B cell (primary cell): ENCODE measurements at regions of chr15 and their contacts with region 1.

Region 1: DNA sequence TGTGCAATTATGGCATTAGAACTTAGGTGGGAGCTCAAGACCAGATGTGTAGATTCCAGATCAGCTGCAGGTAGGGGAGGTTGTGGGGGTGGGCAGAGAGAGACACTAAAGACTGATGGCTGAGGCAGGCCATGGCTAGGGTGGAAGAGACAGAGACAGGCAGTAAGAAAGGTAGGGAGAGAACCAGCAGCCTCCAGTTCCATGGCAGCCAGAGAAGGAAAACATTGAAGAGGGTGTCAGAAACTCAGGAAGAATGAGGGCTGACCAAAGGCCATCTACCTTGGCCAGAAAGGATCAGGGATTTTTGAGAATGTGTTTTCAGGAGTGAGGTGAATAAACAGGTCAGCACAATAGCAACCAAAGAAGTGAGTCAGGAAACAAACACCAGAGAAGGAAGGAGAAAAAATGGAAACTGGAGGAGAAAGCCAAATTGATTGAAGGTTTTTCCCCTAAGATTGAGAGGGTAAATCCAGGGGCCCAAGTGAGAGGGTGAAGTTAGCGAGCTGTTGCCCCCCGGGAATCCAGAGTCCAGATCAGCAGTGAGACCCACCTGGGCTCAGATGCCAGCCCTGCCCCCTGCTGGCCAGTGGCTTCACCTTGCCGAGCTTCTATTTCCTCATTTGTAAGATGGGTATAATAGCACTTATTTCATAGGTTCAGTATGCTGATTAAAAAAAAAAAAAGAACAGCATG is 41.0 kb downstream of the ABHD2 start:
- DNase-seq: peak; percentile 66
- ATAC-seq: peak; percentile 66
- H3K4me3 ChIP-seq: no peak overlapping the region
- H3K4me3 Mint-ChIP-seq: no peak overlapping the region
- H3K27ac ChIP-seq: no peak overlapping the region
- H3K27ac Mint-ChIP-seq: no peak overlapping the region
- H3K4me1 ChIP-seq: peaks cover 4 to 15% of the 10 kb centered on the region in 2 donors
- H3K4me1 Mint-ChIP-seq: peaks cover 16% of the 10 kb centered on the region
- H3K27me3 ChIP-seq: no peaks in the 10 kb centered on the region
- H3K27me3 Mint-ChIP-seq: no peaks in the 10 kb centered on the region
- CTCF ChIP-seq: peak; percentile 86

Region 2: GRCh38 chr15:88897456-88898194 is 231.6 kb before region 1 on chr15:
- CTCF ChIA-PET with region 1: interaction called, 75 read pairs
- POLR2A ChIA-PET with region 1: no interaction called
- intact Hi-C with region 1: loop called (anchors 2 kb)
- DNase-seq: peak; percentile 44
- ATAC-seq: peak; percentile 70
- H3K4me3 ChIP-seq: no peak overlapping the region
- H3K4me3 Mint-ChIP-seq: no peak overlapping the region
- H3K27ac ChIP-seq: no peak overlapping the region
- H3K27ac Mint-ChIP-seq: no peak overlapping the region
- H3K4me1 ChIP-seq: peaks cover 12 to 22% of the 10 kb centered on the region in 2 donors
- H3K4me1 Mint-ChIP-seq: peaks cover 14% of the 10 kb centered on the region
- H3K27me3 ChIP-seq: peaks cover 0 to 15% (median 0%) of the 10 kb centered on the region in 4 experiments
- H3K27me3 Mint-ChIP-seq: peaks cover 8% of the 10 kb centered on the region
- CTCF ChIP-seq: no peak

Region 3: DNA sequence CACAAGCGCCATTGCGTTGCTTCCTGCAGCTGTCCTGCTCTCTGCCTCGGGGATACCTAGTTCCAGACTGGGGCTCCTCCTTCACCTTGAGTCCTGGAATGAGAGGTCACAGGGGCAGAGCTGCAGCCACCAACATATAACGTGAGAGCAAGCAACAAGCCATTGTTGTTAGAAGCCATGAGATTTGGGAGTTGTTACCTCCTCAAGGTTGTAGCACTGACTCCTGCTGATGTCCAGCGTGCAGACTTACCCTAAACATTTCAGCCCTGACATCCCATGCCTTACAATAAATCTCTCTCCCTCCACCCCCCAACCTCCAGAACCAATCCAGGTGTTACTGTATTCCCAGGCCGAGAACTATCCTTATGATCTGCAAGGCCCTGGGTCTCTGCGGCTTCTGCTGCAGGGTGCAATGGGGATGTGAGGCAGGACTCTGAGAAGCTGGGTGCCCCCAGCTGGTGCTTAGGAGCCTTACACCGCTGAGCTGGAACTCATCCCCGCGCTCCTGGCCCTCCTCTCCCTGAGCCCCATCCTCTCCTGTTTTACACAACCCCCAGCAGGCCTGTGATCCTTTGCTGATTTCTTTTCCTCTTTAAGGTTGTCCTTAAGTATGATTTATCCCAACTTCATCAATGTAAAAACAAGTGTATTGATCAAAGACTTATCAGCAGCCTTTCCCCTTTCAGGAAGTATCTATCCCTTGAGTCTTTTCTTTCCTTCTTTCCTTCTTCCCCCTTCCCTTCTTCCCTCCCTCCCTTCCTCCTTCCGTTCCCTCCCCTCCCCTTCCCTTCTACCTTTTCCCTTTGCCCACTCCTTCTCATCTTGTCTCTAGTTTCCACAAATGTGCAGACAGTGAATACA is 125.2 kb before region 1 on chr15:
- CTCF ChIA-PET with region 1: no interaction called
- POLR2A ChIA-PET with region 1: no interaction called
- intact Hi-C with region 1: no loop called
- DNase-seq: no peak
- ATAC-seq: no peak
- H3K4me3 ChIP-seq: no peak overlapping the region
- H3K4me3 Mint-ChIP-seq: no peak overlapping the region
- H3K27ac ChIP-seq: no peak overlapping the region
- H3K27ac Mint-ChIP-seq: no peak overlapping the region
- H3K4me1 ChIP-seq: no peaks in the 10 kb centered on the region
- H3K4me1 Mint-ChIP-seq: peaks cover 4% of the 10 kb centered on the region
- H3K27me3 ChIP-seq: peaks cover 0 to 3% (median 0%) of the 10 kb centered on the region in 4 experiments
- H3K27me3 Mint-ChIP-seq: peaks cover 32% of the 10 kb centered on the region
- CTCF ChIP-seq: no peak

Region 4: DNA sequence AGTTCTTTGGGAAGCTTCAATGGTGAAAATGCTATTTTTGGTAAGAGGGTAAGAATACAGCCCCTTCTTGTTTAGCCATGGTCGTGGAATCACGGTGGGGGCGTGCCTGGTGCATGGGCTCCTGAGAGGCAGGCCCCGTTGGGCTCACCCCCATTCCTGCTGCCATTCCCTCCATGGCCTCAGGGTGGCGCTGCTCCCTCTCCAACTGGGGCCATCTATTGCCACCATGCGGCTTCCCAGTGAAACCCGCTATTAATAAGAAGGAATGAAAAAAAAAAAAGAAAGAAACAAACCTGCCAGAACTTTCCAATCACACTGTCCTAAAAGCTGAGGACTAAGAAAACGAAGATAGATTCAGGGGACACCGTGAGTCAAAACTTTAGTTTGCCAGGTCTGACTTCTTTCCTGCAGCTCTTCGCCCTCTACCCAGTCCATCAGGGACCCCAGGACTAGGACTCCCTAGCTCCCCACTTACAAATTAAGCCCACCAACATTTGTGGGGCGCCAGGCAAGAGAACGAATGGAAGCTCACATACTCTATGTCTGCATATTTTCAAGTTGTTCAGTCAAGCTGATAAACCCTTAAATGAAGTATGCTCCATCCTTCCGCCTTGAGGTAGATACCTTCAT is 71.7 kb before region 1 on chr15:
- CTCF ChIA-PET with region 1: interaction called, 165 read pairs
- POLR2A ChIA-PET with region 1: no interaction called
- intact Hi-C with region 1: no loop called
- DNase-seq: peak; percentile 74
- ATAC-seq: peak; percentile 91
- H3K4me3 ChIP-seq: no peak overlapping the region
- H3K4me3 Mint-ChIP-seq: no peak overlapping the region
- H3K27ac ChIP-seq: no peak overlapping the region
- H3K27ac Mint-ChIP-seq: no peak overlapping the region
- H3K4me1 ChIP-seq: no peaks in the 10 kb centered on the region
- H3K4me1 Mint-ChIP-seq: no peaks in the 10 kb centered on the region
- H3K27me3 ChIP-seq: peaks cover 0 to 8% (median 0%) of the 10 kb centered on the region in 4 experiments
- H3K27me3 Mint-ChIP-seq: peaks cover 14% of the 10 kb centered on the region
- CTCF ChIP-seq: peak; percentile 95

Region 5: DNA sequence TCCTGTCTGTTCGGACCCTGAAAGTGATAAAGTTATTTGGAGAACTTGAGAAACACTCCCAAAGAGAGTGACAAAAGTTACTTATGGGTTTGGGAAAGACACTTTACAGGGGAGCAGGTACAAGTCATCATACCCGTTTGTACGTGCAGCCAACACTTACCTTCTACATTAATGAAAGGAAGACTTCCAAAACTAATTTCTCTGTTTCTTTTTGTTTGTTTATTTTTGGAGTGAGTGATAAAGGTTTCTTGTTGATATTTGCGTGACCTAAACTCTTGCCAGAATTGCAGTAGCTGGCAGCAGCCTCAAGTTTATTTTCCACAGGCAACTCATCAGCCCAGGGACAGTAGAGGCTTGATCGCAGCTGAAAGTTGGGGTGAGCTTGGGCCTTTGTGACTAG is 32.6 kb before region 1 on chr15:
- CTCF ChIA-PET with region 1: interaction called, 53 read pairs
- POLR2A ChIA-PET with region 1: no interaction called
- intact Hi-C with region 1: no loop called
- DNase-seq: no peak
- ATAC-seq: no peak
- H3K4me3 ChIP-seq: no peak overlapping the region
- H3K4me3 Mint-ChIP-seq: no peak overlapping the region
- H3K27ac ChIP-seq: no peak overlapping the region
- H3K27ac Mint-ChIP-seq: no peak overlapping the region
- H3K4me1 ChIP-seq: peaks cover 4% of the 10 kb centered on the region in 2 donors
- H3K4me1 Mint-ChIP-seq: peaks cover 5% of the 10 kb centered on the region
- H3K27me3 ChIP-seq: no peaks in the 10 kb centered on the region
- H3K27me3 Mint-ChIP-seq: no peaks in the 10 kb centered on the region
- CTCF ChIP-seq: no peak

Region 6: DNA sequence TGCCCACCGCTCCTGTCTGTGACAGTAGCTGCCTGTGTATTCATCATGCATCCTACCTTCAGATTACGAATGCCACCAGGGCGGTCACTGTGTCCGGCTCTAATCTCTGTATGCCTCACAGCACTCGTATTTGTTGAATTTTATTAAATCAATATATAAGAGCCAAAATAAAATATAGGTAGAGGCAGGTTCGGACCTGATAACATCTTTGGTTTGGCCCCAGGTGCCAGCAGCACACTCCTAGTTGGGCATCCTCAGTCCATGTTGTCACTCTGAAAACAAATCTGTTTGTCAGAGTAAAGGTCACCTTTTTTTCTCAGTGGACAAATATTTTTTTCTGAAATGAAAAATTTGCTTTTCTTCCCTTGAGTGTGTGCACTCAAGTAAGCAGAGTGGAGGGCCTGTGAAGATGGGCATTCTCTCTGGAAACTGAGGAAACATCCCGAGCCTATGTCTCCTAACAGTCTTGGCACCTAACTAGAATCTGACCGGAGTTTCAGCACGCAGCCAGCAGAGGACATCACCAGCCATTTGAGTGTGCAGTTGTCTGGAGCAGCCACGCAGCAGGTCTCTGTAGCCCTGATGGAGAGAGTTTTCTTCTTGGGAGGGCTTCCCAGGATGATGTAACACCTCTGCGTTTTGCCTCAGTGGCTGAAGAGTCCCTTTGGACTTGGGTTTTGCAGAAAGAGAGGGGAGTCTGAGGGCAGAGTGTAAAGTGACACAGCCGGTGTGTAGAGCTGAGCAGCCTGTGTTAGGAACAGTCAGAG is 10.3 kb after region 1 on chr15:
- CTCF ChIA-PET with region 1: interaction called, 10 read pairs
- POLR2A ChIA-PET with region 1: no interaction called
- intact Hi-C with region 1: no loop called
- DNase-seq: no peak
- ATAC-seq: no peak
- H3K4me3 ChIP-seq: no peak overlapping the region
- H3K4me3 Mint-ChIP-seq: no peak overlapping the region
- H3K27ac ChIP-seq: no peak overlapping the region
- H3K27ac Mint-ChIP-seq: no peak overlapping the region
- H3K4me1 ChIP-seq: no peaks in the 10 kb centered on the region
- H3K4me1 Mint-ChIP-seq: peaks cover 4% of the 10 kb centered on the region
- H3K27me3 ChIP-seq: no peaks in the 10 kb centered on the region
- H3K27me3 Mint-ChIP-seq: no peaks in the 10 kb centered on the region
- CTCF ChIP-seq: no peak